H1 (cell line): ENCODE measurements at regions of chr14 and their contacts with region 1.

Region 1: DNA sequence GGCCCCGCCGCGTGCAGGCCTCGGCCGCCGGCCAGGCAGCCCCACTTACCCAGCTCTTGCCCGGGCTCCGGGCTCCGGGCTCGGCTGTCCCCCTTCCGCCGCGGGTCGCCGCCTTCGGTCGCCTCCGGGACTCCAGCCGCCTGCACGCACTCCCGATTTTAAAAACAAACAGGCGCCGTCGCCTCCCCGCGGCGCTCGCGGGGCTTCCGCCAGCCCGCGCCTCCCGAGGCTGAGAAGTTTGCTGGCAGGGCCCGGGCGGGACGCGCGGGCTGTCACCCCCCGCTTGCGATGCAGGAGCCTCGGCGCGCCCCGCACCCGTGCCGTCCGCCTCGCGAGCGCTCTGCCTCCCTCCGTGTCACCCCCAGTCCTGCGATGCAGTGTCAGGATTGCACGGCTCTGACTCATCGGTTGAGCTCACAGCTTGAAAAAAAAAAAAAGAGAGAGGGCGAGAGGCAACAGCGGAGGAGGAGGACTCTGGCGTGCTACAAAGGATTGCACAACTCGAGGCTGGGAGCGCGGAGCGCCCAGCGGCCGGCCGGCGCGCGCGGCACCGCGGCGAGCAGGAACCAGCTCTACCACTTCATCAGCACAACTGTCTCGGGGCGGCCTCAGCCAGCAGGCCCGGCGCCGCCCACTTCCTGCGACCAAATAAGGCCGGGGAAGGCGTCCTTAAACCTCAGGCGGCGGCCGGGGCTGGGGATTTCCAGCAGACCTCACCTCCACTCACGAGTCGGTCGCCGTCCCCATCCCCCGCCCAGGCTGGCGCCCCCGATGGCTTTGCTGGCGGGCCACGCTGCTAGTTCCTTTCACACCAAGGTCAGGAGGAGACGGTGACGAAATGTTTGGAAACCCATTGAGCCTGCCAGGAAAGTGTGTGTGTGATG is 45.8 kb upstream of the PNMA1 start:
- DNase-seq: peak; percentile 84 to 94
- H3K4me3 ChIP-seq: peak overlapping the region; percentile 55 to 74 (median 66)
- H3K27ac ChIP-seq: peak overlapping the region; percentile 69; the same call in 1 of the 2 replicates
- H3K4me1 ChIP-seq: peaks cover 11 to 35% (median 14%) of the 10 kb centered on the region in 4 experiments
- H3K27me3 ChIP-seq: peaks cover 0 to 15% (median 10%) of the 10 kb centered on the region in 4 experiments; a peak in 5 of 7 replicates
- CTCF ChIP-seq: no peak
- EP300 ChIP-seq: no peak
- POLR2A ChIP-seq: peak; percentile 85 to 93
- RAD21 ChIP-seq: no peak

Region 2: GRCh38 chr14:73728717-73729330 is 31.1 kb before region 1 on chr14:
- CTCF ChIA-PET with region 1: interaction called, 179 read pairs
- POLR2A ChIA-PET with region 1: interaction called, 12 read pairs
- DNase-seq: peak; percentile 79 to 97
- H3K4me3 ChIP-seq: no peak overlapping the region
- H3K27ac ChIP-seq: no peak overlapping the region
- H3K4me1 ChIP-seq: peaks cover 0 to 6% (median 3%) of the 10 kb centered on the region in 4 experiments; a peak in 4 of 7 replicates
- H3K27me3 ChIP-seq: no peaks in the 10 kb centered on the region
- CTCF ChIP-seq: peak; percentile 96 to 97 (median 97)
- EP300 ChIP-seq: no peak
- POLR2A ChIP-seq: no peak
- RAD21 ChIP-seq: peak; percentile 96 to 97

Region 3: GRCh38 chr14:73746520-73747378 is 13.2 kb before region 1 on chr14:
- CTCF ChIA-PET with region 1: interaction called, 198 read pairs
- POLR2A ChIA-PET with region 1: interaction called, 13 read pairs
- DNase-seq: no peak
- H3K4me3 ChIP-seq: no peak overlapping the region
- H3K27ac ChIP-seq: no peak overlapping the region
- H3K4me1 ChIP-seq: peaks cover 13 to 40% (median 26%) of the 10 kb centered on the region in 4 experiments
- H3K27me3 ChIP-seq: no peaks in the 10 kb centered on the region
- CTCF ChIP-seq: peak; percentile 42 to 60 (median 55)
- EP300 ChIP-seq: no peak
- POLR2A ChIP-seq: no peak
- RAD21 ChIP-seq: peak; percentile 57 to 68

Region 4: GRCh38 chr14:73777401-73777800 is 17.4 kb after region 1 on chr14:
- CTCF ChIA-PET with region 1: interaction called, 24 read pairs
- POLR2A ChIA-PET with region 1: interaction called, 17 read pairs
- DNase-seq: no peak
- H3K4me3 ChIP-seq: no peak overlapping the region
- H3K27ac ChIP-seq: no peak overlapping the region
- H3K4me1 ChIP-seq: peaks cover 0 to 3% (median 1%) of the 10 kb centered on the region in 4 experiments; a peak in 3 of 7 replicates
- H3K27me3 ChIP-seq: peaks cover 0 to 26% (median 13%) of the 10 kb centered on the region in 4 experiments; a peak in 6 of 7 replicates
- CTCF ChIP-seq: peak; percentile 43 to 65 (median 54)
- EP300 ChIP-seq: no peak
- POLR2A ChIP-seq: no peak
- RAD21 ChIP-seq: peak; percentile 64 to 71

Region 5: DNA sequence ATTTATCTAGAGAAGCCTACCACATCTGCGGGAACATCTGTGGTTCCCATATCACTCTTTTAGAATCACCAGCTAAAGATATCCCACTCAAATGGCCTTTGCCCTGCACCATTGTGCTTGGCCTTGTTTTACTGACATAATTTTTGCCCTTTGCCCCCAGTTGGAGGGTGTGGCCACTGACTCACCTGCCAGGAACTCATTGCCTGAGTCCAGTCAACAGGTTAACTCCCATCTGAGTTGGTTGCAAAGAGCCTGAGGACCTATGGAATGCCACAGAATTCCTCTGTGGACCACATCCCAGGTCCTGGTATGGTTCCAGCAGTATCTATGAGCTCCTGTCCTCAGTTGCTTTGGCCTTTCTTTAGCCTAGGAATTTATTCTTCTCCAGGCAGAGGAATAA is 36.0 kb after region 1 on chr14:
- CTCF ChIA-PET with region 1: interaction called, 10 read pairs
- POLR2A ChIA-PET with region 1: interaction called, 3 read pairs
- DNase-seq: no peak
- H3K4me3 ChIP-seq: no peak overlapping the region
- H3K27ac ChIP-seq: no peak overlapping the region
- H3K4me1 ChIP-seq: peaks cover 0 to 4% (median 1%) of the 10 kb centered on the region in 4 experiments; a peak in 3 of 7 replicates
- H3K27me3 ChIP-seq: peaks cover 0 to 2% (median 0%) of the 10 kb centered on the region in 4 experiments; a peak in 1 of 7 replicates
- CTCF ChIP-seq: no peak
- EP300 ChIP-seq: no peak
- POLR2A ChIP-seq: no peak
- RAD21 ChIP-seq: no peak